Gastrocnemius medialis (tissue), 4 donors: ENCODE measurements at regions of chr1 and their contacts with region 1.

Region 1: DNA sequence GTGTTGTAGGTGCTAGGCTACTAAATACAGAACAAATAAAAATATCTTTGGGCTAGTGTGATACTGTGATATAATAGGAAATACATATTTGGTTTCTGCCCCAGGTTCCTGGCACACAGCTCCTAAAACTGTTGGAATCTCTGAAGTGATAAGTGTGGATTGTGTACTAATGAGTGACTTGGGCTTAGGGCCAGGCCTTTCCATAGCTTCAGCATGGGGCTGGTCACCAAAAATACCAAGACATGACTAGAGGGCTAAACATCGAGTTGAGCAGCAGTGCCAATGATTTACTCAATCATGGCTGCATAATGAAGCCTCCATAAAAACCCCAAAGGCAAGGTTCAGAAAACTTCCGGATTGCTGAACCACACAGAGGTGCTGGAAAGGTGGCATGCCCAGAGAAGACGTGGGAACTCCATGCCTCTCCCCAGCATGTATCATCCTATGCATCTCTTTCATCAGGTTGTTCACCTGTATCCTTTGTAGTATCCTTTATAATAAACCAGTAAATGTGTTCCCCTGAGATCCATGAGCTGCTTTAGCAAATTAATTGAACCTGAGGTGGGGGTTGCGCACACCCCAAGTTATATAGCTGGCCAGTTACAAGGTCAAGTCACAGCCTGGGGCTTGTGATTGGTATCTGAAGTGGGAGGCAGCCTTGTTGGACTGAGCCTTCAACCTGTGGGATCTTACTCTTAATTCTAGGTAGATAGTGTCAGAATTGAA is 51.6 kb downstream of the ZMYM4 start:
- DNase-seq: no peak
- ATAC-seq: peak; percentile 72 to 93
- H3K4me3 ChIP-seq: no peak overlapping the region
- H3K27ac ChIP-seq: peak overlapping the region; percentile 24 to 60 (median 54)
- H3K4me1 ChIP-seq: peaks cover 34 to 36% of the 10 kb centered on the region in 2 donors
- H3K27me3 ChIP-seq: no peaks in the 10 kb centered on the region
- CTCF ChIP-seq: no peak
- POLR2A ChIP-seq: no peak

Region 2: DNA sequence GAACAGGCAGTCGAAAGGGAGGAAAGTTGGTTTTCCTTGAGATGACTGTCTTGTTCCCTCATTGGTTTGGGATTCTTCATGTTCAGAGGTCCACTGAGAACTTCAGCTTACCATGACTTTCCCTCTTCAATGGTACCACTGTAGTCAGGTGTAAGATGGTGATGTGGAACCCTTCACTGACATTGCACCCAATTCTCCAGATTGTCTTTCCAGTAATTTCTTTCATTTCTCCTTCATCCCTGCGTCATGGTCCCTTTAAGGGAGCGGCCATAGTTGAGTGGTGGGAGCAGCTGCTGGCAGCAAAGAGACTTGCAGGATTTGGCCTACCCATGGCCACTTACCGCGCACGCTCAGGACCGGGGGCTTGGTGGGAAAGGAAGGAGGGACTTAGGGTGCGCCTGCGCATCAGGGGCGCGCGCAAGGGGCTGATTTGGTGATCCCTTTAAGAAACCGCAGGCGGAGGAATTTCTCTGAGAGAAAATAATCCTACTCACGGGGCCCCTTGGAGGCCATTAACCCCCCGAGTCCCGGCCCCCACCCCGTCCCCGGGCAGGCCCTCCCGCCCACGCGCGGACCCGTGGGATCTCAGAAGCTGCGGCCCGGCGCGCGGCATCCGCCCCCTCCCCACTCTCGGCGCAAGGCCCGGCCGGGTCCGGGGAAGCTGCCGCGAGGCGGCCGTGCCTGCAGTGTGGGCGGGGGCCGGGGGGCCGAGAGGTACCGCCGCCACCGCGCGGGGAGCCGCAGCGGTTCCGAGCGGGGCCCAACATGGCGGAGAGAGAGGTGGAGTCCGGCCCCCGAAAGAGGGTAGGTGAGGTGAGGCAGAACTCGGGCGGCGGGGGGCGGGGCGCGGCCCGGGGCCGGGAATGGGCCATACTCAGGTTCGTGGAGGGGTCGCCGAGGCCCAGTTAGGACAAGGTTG is 51.6 kb before region 1 on chr1 and contains the start of gene ZMYM4:
- in situ Hi-C with region 1: no loop called
- intact Hi-C with region 1: loop called (anchors 2 kb)
- DNase-seq: peak; percentile 78 to 93
- ATAC-seq: peak; percentile 91 to 95
- H3K4me3 ChIP-seq: peak within 1 kb of the TSS; percentile 75 to 94 (median 88)
- H3K27ac ChIP-seq: peak within 1 kb of the TSS; percentile 79 to 92 (median 88)
- H3K4me1 ChIP-seq: peaks cover 3 to 12% of the 10 kb centered on the region in 2 donors
- H3K27me3 ChIP-seq: no peaks in the 10 kb centered on the region
- CTCF ChIP-seq: no peak
- POLR2A ChIP-seq: no peak
- total RNA-seq, gene ZMYM4: 11.1 to 25.3 (median 13.7) TPM